MCF 10A (cell line): ENCODE measurements at regions of chr1 and their contacts with region 1.

Region 1: DNA sequence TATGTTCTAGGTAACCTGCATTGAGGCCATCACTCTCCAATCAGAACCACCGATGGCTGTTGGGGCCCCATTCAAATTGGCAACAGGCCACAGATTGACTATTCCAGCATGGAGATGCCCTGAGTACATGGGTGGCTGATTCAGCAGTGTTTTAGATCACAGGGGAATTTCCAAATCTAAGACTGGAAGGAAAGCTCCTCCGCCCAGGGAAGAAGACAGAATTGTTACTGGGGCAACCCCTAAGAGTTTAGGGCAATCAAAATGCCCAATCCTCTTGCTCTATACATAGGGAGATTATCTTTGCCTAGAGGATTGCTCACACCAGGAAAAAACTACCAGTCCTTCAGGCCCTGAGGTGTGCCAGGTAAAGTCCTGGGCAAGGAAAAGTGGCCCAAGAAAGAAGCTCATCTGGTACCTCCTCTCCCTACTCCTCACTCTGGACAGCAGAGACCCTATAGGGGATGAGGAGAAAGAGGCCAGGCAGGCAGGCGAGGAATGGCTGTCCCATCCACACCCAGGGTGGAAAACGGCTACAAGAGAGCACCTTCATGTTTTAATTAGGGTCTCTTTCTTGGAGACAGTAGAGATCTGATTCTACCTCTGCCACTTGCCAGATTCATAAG is 5.8 kb downstream of the S100A8 start:
- DNase-seq: no peak
- H3K4me3 Mint-ChIP-seq: no peak overlapping the region
- H3K27ac Mint-ChIP-seq: peak overlapping the region; percentile 76
- H3K4me1 Mint-ChIP-seq: peaks cover 42% of the 10 kb centered on the region
- H3K27me3 Mint-ChIP-seq: no peaks in the 10 kb centered on the region
- CTCF ChIP-seq: no peak

Region 2: DNA sequence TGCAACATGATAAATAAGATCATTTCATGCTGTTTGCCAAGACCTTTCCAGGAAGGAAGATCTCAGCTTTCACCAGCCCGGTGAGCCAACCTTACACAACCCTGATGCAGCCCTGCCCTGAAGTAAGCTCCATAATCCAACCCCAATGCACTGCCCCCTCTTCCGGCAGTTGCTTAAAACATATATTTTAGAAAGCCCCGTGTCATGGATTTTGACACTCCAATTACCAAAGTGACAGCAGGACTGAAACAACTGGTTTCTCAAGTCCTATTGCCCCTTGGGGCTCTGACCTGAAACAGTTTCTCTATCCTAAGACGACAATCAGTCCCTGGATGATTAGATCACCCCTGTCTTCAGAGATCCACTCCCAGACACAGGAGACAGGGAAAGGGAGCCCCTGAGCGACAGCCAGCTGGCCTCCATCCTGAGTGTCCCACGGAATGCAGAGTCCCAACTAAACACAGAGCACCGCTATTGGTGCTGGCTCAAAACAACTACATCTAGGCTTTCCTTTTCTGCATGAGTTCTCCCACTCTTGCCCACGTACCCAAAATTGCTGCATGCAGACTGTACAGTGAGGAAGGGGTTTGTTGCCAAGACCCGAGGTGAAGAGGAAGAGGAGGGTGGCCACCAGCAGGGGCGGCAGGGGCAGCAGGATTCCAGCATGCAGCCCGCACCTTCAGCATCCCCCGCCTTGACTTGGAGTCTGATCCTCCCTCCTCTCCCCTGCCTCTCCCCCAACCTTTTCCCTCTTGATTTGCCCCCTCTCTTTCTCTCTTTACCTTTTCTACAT is 19.6 kb before region 1 on chr1:
- CTCF ChIA-PET with region 1: interaction called, 4 read pairs
- POLR2A ChIA-PET with region 1: interaction called, 13 read pairs
- intact Hi-C with region 1: no loop called
- DNase-seq: peak; percentile 95
- H3K4me3 Mint-ChIP-seq: peak overlapping the region; percentile 17
- H3K27ac Mint-ChIP-seq: peak overlapping the region; percentile 46
- H3K4me1 Mint-ChIP-seq: peaks cover 56% of the 10 kb centered on the region
- H3K27me3 Mint-ChIP-seq: no peaks in the 10 kb centered on the region
- CTCF ChIP-seq: no peak